CD4-positive, alpha-beta T cell (primary cell): ENCODE measurements at regions of chr10 and their contacts with region 1.

Region 1: GRCh38 chr10:102399217-102400089 is 3.9 kb downstream of the NFKB2 start:
- DNase-seq: peak; percentile 80 to 96 (median 86)
- ATAC-seq: peak; percentile 52
- H3K4me3 ChIP-seq: peak overlapping the region; percentile 43
- H3K4me3 Mint-ChIP-seq: peak overlapping the region; percentile 92
- H3K27ac ChIP-seq: peak overlapping the region; percentile 64 to 88
- H3K27ac Mint-ChIP-seq: peak overlapping the region; percentile 100
- H3K4me1 ChIP-seq: peaks cover 64% of the 10 kb centered on the region
- H3K4me1 Mint-ChIP-seq: peaks cover 44% of the 10 kb centered on the region
- H3K27me3 ChIP-seq: no peaks in the 10 kb centered on the region
- H3K27me3 Mint-ChIP-seq: no peaks in the 10 kb centered on the region
- CTCF ChIP-seq: peak; percentile 99

Region 2: DNA sequence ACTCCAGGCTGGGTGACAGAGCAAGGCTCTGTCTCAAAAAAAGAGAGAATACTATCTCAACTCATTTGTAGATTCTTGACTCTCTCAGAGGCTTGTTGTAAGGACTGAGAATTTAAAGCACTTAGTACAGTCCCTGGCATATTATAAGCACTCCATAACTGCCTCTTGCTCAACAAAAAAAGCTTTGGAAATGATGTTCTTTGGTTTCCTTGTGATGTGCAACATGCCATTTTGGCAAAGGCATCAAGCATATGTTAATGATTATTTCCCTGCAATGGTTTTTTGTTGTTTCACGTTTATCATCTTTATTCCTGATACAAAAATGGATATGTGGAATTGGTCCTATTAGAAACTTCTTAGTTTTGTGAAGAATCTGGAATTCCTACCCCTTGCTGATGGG is 231.6 kb before region 1 on chr10:
- CTCF ChIA-PET with region 1: no interaction called
- POLR2A ChIA-PET with region 1: interaction called, 7 read pairs
- intact Hi-C with region 1: loop called in 1 of 2 experiments (anchors 5 kb)
- DNase-seq: no peak
- ATAC-seq: no peak
- H3K4me3 ChIP-seq: no peak overlapping the region
- H3K4me3 Mint-ChIP-seq: no peak overlapping the region
- H3K27ac ChIP-seq: no peak overlapping the region
- H3K27ac Mint-ChIP-seq: no peak overlapping the region
- H3K4me1 ChIP-seq: peaks cover 10% of the 10 kb centered on the region
- H3K4me1 Mint-ChIP-seq: peaks cover 8% of the 10 kb centered on the region
- H3K27me3 ChIP-seq: no peaks in the 10 kb centered on the region
- H3K27me3 Mint-ChIP-seq: peaks cover 4% of the 10 kb centered on the region
- CTCF ChIP-seq: no peak

Region 3: GRCh38 chr10:102225646-102226541 is 173.6 kb before region 1 on chr10 and contains the start of gene ELOVL3:
- CTCF ChIA-PET with region 1: interaction called, 11 read pairs
- POLR2A ChIA-PET with region 1: interaction called, 22 read pairs
- intact Hi-C with region 1: loop called in 1 of 2 experiments (anchors 2 kb)
- DNase-seq: peak; percentile 64 to 93 (median 80)
- ATAC-seq: peak; percentile 92
- H3K4me3 ChIP-seq: peak within 1 kb of the TSS; percentile 44
- H3K4me3 Mint-ChIP-seq: peak within 1 kb of the TSS; percentile 68
- H3K27ac ChIP-seq: no peak within 1 kb of the TSS
- H3K27ac Mint-ChIP-seq: no peak within 1 kb of the TSS
- H3K4me1 ChIP-seq: peaks cover 28% of the 10 kb centered on the region
- H3K4me1 Mint-ChIP-seq: peaks cover 18% of the 10 kb centered on the region
- H3K27me3 ChIP-seq: peaks cover 22 to 31% of the 10 kb centered on the region in 2 experiments
- H3K27me3 Mint-ChIP-seq: peaks cover 69% of the 10 kb centered on the region
- CTCF ChIP-seq: no peak
- total RNA-seq, gene ELOVL3: not detected

Region 4: DNA sequence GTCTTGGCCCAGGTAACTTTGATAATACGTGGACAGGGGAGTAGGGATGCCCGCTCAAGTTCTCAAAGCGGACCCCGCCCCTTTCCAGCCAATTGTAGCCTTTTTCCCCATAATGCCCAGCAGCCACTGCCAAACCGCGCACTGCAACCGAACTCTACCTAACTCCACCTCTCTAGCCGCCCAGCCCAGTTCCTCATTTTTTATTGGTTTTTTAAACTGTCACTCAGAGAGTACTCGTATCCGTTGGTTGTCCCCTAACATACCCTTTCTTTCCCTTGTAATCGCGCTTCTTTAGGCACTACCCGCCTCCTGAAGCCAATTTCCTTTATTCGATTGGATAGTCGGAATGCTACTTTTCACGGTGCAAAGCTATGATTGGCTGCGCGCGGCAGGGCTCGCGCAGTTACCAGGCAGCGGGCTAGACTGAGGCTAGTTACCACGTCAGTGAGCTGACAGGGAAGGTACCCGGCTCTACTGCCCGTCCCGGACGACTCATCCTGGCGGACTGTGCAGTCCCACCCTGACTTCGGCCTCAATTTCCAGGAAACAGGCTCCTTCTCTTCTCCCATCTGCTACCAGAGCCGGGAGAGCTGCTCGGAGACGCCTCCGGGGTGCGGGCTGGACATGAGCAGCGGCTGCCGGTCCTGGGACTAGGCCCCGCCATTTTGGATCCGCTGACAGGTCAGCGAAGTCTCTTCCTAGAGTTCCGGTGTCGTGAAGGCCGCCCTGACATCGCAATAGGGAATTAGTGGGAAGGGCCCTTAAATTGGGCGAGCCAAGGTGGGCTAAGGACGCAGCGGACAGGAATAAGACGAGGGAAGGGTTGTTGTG is 154.1 kb before region 1 on chr10 and contains the start of gene GBF1:
- CTCF ChIA-PET with region 1: no interaction called
- POLR2A ChIA-PET with region 1: interaction called, 3 read pairs
- intact Hi-C with region 1: loop called in 1 of 2 experiments (anchors 5 kb)
- DNase-seq: peak; percentile 76 to 99 (median 84)
- ATAC-seq: peak; percentile 89
- H3K4me3 ChIP-seq: peak within 1 kb of the TSS; percentile 74
- H3K4me3 Mint-ChIP-seq: peak within 1 kb of the TSS; percentile 96
- H3K27ac ChIP-seq: peak within 1 kb of the TSS; percentile 84 to 88
- H3K27ac Mint-ChIP-seq: peak within 1 kb of the TSS; percentile 86
- H3K4me1 ChIP-seq: peaks cover 60% of the 10 kb centered on the region
- H3K4me1 Mint-ChIP-seq: peaks cover 58% of the 10 kb centered on the region
- H3K27me3 ChIP-seq: peaks cover 20 to 28% of the 10 kb centered on the region in 2 experiments
- H3K27me3 Mint-ChIP-seq: peaks cover 40% of the 10 kb centered on the region
- CTCF ChIP-seq: no peak
- total RNA-seq, gene GBF1: 28.8 to 30.9 TPM

Region 5: DNA sequence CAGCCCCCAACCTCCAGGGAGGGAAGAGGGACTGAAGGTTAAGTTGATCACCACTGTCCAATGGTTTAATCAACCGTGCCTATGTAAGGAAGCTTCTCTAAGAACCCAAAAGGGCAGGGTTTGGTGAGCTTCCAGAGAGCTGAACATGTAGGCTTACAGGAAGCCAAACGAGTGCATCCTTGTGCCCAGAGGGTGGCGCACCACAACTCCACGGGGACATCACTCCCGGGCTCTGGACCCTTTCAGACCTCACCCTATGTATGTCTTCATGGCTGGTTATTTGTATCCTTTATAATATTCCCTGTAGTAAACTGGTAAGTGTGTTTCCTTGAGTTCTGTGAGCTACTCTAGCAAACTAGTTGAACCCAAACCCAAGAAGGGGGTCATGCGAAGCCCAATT is 15.4 kb before region 1 on chr10:
- CTCF ChIA-PET with region 1: interaction called, 10 read pairs
- POLR2A ChIA-PET with region 1: interaction called, 11 read pairs
- intact Hi-C with region 1: no loop called
- DNase-seq: peak in 3 of 14 experiments; percentile 26 to 57 (median 48)
- ATAC-seq: no peak
- H3K4me3 ChIP-seq: no peak overlapping the region
- H3K4me3 Mint-ChIP-seq: no peak overlapping the region
- H3K27ac ChIP-seq: no peak overlapping the region
- H3K27ac Mint-ChIP-seq: no peak overlapping the region
- H3K4me1 ChIP-seq: no peaks in the 10 kb centered on the region
- H3K4me1 Mint-ChIP-seq: no peaks in the 10 kb centered on the region
- H3K27me3 ChIP-seq: no peaks in the 10 kb centered on the region
- H3K27me3 Mint-ChIP-seq: no peaks in the 10 kb centered on the region
- CTCF ChIP-seq: no peak

Region 6: DNA sequence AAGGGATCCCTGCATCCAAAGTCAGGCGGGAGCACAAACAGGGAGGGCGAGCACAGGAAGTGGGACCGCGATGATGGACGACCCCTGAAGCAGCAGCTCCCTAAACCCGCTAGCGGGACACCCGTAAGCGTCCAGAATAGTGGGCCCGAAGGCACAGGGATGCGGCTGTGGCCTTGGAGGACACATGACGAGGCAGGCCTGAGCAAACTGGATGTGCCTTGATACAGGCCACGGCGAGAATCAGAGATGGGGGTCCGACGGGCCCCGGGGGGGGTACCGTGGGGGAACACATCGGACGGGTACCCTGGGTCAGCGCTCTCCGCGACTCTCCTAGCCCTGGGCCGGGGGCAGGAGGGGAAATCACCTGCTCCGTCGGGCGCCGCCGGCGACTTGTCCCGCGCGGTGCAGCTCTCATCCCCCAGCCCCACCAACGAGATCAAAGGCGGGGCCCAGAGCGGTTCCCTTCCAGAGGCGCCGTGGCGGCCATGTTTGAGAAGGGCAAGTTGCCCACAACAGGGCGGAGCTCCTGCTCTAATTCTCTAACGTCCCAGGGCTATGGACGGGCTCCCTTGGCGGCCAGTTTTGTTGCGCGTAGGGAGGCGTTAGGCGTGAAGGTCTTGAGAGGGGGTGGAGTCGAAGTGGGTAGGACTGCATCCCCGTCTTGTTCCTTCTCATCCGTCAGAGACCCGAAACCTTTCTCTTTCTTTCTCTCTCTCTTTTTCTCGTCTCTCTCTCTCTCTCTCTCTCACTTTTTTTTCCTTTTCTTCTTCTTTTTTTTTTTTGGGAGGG is 32.9 kb after region 1 on chr10 and contains the start of gene CUEDC2:
- CTCF ChIA-PET with region 1: interaction called, 10 read pairs
- POLR2A ChIA-PET with region 1: interaction called, 33 read pairs
- intact Hi-C with region 1: no loop called
- DNase-seq: peak; percentile 90 to 97 (median 96)
- ATAC-seq: peak; percentile 93
- H3K4me3 ChIP-seq: peak within 1 kb of the TSS; percentile 72
- H3K4me3 Mint-ChIP-seq: peak within 1 kb of the TSS; percentile 95
- H3K27ac ChIP-seq: peak within 1 kb of the TSS; percentile 23 to 37
- H3K27ac Mint-ChIP-seq: peak within 1 kb of the TSS; percentile 92
- H3K4me1 ChIP-seq: peaks cover 57% of the 10 kb centered on the region
- H3K4me1 Mint-ChIP-seq: peaks cover 56% of the 10 kb centered on the region
- H3K27me3 ChIP-seq: no peaks in the 10 kb centered on the region
- H3K27me3 Mint-ChIP-seq: no peaks in the 10 kb centered on the region
- CTCF ChIP-seq: no peak
- total RNA-seq, gene CUEDC2: 25.5 to 25.6 TPM

Region 7: GRCh38 chr10:102450194-102450938 is 50.9 kb after region 1 on chr10:
- CTCF ChIA-PET with region 1: interaction called, 7 read pairs
- POLR2A ChIA-PET with region 1: interaction called, 59 read pairs
- intact Hi-C with region 1: loop called (anchors 1 kb)
- DNase-seq: peak; percentile 78 to 98 (median 88)
- ATAC-seq: peak; percentile 77
- H3K4me3 ChIP-seq: peak overlapping the region; percentile 83
- H3K4me3 Mint-ChIP-seq: peak overlapping the region; percentile 94
- H3K27ac ChIP-seq: peak overlapping the region; percentile 79 to 80
- H3K27ac Mint-ChIP-seq: peak overlapping the region; percentile 78
- H3K4me1 ChIP-seq: peaks cover 41% of the 10 kb centered on the region
- H3K4me1 Mint-ChIP-seq: peaks cover 21% of the 10 kb centered on the region
- H3K27me3 ChIP-seq: no peaks in the 10 kb centered on the region
- H3K27me3 Mint-ChIP-seq: no peaks in the 10 kb centered on the region
- CTCF ChIP-seq: no peak